GM12878 (cell line): ENCODE measurements at regions of chr5 and their contacts with region 1.

Region 1: DNA sequence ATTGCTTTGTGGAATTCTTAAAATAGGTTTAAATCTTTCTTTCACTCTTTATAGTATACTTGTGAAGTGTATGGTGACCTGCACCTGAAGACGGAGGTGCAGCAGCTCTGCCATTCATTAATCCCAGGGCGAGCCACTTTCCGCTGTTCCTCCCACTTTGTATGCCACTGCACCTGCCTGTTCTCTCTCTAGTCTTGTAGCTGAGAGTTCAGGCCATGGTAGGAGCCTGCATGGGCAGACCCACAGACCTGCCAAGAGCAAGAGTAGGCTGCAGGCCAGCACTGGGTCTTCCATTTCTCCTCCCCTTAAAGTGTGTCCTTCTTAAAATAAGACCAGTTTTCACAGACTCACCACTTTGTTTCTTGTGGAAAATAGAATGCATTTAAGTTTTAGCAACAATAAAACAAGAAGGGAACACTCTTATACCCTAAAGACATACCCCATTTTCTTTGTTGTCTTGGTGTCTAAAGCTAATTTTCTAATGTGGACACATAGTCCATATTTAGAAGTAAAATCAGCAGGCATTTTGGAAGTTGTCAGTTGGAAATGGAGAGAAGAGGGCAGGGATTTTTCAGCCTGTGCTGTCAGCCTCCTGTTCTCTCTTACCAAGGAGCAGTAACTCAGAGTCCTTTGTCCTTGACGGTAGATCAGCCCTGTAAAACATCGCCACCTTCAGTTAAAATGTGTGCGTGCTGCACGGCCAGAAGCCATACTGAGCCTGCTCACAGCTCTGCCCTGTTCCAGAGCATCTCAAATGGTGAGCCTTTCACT is 103.2 kb downstream of the SNCAIP start:
- DNase-seq: no peak
- ATAC-seq: peak; percentile 93
- H3K4me3 ChIP-seq: no peak overlapping the region
- H3K27ac ChIP-seq: no peak overlapping the region
- H3K4me1 ChIP-seq: peaks cover 20% of the 10 kb centered on the region
- H3K27me3 ChIP-seq: no peaks in the 10 kb centered on the region
- CTCF ChIP-seq: peak; percentile 63 to 88 (median 88)
- EP300 ChIP-seq: no peak
- POLR2A ChIP-seq: no peak
- RAD21 ChIP-seq: peak; percentile 93

Region 2: GRCh38 chr5:121968910-121969607 is 446.2 kb before region 1 on chr5:
- CTCF ChIA-PET with region 1: interaction called, 6 read pairs
- POLR2A ChIA-PET with region 1: interaction called, 4 read pairs
- RAD21 ChIA-PET with region 1: no interaction called
- SMC1A ChIA-PET with region 1: no interaction called
- in situ Hi-C with region 1: no loop called
- intact Hi-C with region 1: loop called (anchors 10 kb)
- DNase-seq: no peak
- ATAC-seq: peak; percentile 60
- H3K4me3 ChIP-seq: no peak overlapping the region
- H3K27ac ChIP-seq: no peak overlapping the region
- H3K4me1 ChIP-seq: peaks cover 3% of the 10 kb centered on the region; the same call in 1 of the 2 replicates
- H3K27me3 ChIP-seq: no peaks in the 10 kb centered on the region
- CTCF ChIP-seq: no peak
- EP300 ChIP-seq: no peak
- POLR2A ChIP-seq: no peak
- RAD21 ChIP-seq: no peak

Region 3: GRCh38 chr5:122192497-122193496 is 222.4 kb before region 1 on chr5:
- CTCF ChIA-PET with region 1: interaction called, 65 read pairs
- POLR2A ChIA-PET with region 1: interaction called, 5 read pairs
- RAD21 ChIA-PET with region 1: interaction called, 26 read pairs
- SMC1A ChIA-PET with region 1: interaction called, 41 read pairs
- in situ Hi-C with region 1: loop called (anchors 5 kb)
- intact Hi-C with region 1: loop called (anchors 1 kb)
- DNase-seq: peak; percentile 11
- ATAC-seq: peak; percentile 95
- H3K4me3 ChIP-seq: no peak overlapping the region
- H3K27ac ChIP-seq: no peak overlapping the region
- H3K4me1 ChIP-seq: no peaks in the 10 kb centered on the region
- H3K27me3 ChIP-seq: no peaks in the 10 kb centered on the region; a peak in 2 of 4 replicates
- CTCF ChIP-seq: peak; percentile 56 to 65 (median 58)
- EP300 ChIP-seq: no peak
- POLR2A ChIP-seq: no peak
- RAD21 ChIP-seq: peak; percentile 89

Region 4: GRCh38 chr5:122295138-122295537 is 120.1 kb before region 1 on chr5:
- CTCF ChIA-PET with region 1: interaction called, 47 read pairs
- POLR2A ChIA-PET with region 1: no interaction called
- RAD21 ChIA-PET with region 1: interaction called, 35 read pairs
- SMC1A ChIA-PET with region 1: interaction called, 18 read pairs
- in situ Hi-C with region 1: no loop called
- intact Hi-C with region 1: loop called (anchors 2 kb)
- DNase-seq: no peak
- ATAC-seq: peak; percentile 82
- H3K4me3 ChIP-seq: no peak overlapping the region
- H3K27ac ChIP-seq: no peak overlapping the region
- H3K4me1 ChIP-seq: peaks cover 12% of the 10 kb centered on the region
- H3K27me3 ChIP-seq: no peaks in the 10 kb centered on the region; a peak in 1 of 4 replicates
- CTCF ChIP-seq: peak; percentile 36 to 46 (median 38); a peak in 4 of 6 replicates
- EP300 ChIP-seq: no peak
- POLR2A ChIP-seq: no peak
- RAD21 ChIP-seq: peak; percentile 29; the same call in 1 of the 2 replicates

Region 5: GRCh38 chr5:122300374-122300773 is 114.8 kb before region 1 on chr5:
- CTCF ChIA-PET with region 1: interaction called, 47 read pairs
- POLR2A ChIA-PET with region 1: no interaction called
- RAD21 ChIA-PET with region 1: interaction called, 35 read pairs
- SMC1A ChIA-PET with region 1: interaction called, 18 read pairs
- in situ Hi-C with region 1: no loop called
- intact Hi-C with region 1: loop called (anchors 2 kb)
- DNase-seq: no peak
- ATAC-seq: peak; percentile 63
- H3K4me3 ChIP-seq: no peak overlapping the region
- H3K27ac ChIP-seq: no peak overlapping the region
- H3K4me1 ChIP-seq: peaks cover 12% of the 10 kb centered on the region
- H3K27me3 ChIP-seq: no peaks in the 10 kb centered on the region
- CTCF ChIP-seq: no peak
- EP300 ChIP-seq: no peak
- POLR2A ChIP-seq: no peak
- RAD21 ChIP-seq: no peak

Region 6: DNA sequence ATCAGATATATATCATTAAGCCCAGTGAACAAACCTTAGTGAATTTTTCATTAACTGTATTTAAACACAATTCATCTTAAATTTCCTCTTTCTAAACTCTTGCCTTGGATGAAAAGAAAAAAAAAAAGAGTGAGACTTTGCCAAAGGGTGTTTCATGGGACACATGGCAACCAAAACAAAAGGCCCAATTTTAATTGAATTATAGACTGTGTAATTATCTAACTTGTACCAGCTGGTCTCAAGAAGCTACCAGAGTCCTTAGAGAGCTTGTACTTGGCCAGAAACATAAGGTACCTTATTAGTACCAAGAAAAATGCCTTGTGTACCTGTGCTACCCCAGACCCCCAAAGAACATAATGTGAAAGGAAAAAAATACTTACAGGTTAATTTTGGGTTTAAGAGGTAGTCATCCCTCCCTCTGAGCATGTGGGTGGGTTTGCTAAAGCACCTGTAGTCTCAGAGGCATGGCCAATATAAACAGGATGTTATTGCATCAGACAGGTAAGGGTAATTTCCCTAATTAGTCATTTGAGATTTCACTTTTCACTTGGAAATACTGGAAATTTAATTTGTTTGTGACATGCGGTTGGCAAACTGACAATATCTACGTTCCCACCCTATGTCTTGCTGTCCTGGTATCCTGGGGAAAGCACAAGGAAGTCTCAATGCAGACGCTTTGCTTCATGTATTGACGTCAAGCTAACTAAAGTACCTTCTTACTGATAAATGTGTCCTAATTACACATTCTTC is 13.1 kb before region 1 on chr5:
- CTCF ChIA-PET with region 1: interaction called, 11 read pairs
- POLR2A ChIA-PET with region 1: no interaction called
- RAD21 ChIA-PET with region 1: interaction called, 4 read pairs
- SMC1A ChIA-PET with region 1: interaction called, 9 read pairs
- in situ Hi-C with region 1: no loop called
- intact Hi-C with region 1: no loop called
- DNase-seq: no peak
- ATAC-seq: no peak
- H3K4me3 ChIP-seq: no peak overlapping the region
- H3K27ac ChIP-seq: no peak overlapping the region
- H3K4me1 ChIP-seq: no peaks in the 10 kb centered on the region
- H3K27me3 ChIP-seq: no peaks in the 10 kb centered on the region
- CTCF ChIP-seq: no peak
- EP300 ChIP-seq: no peak
- POLR2A ChIP-seq: no peak
- RAD21 ChIP-seq: no peak

Region 7: GRCh38 chr5:122492664-122493063 is 77.4 kb after region 1 on chr5:
- CTCF ChIA-PET with region 1: no interaction called
- POLR2A ChIA-PET with region 1: no interaction called
- RAD21 ChIA-PET with region 1: no interaction called
- SMC1A ChIA-PET with region 1: no interaction called
- in situ Hi-C with region 1: no loop called
- intact Hi-C with region 1: loop called (anchors 5 kb)
- DNase-seq: no peak
- ATAC-seq: peak; percentile 68
- H3K4me3 ChIP-seq: no peak overlapping the region
- H3K27ac ChIP-seq: no peak overlapping the region
- H3K4me1 ChIP-seq: no peaks in the 10 kb centered on the region
- H3K27me3 ChIP-seq: peaks cover 0 to 3% of the 10 kb centered on the region in 2 experiments; a peak in 1 of 4 replicates
- CTCF ChIP-seq: peak; percentile 23 to 52 (median 36); a peak in 5 of 6 replicates
- EP300 ChIP-seq: no peak
- POLR2A ChIP-seq: no peak
- RAD21 ChIP-seq: peak; percentile 70

Region 8: GRCh38 chr5:122565331-122565730 is 150.1 kb after region 1 on chr5:
- CTCF ChIA-PET with region 1: no interaction called
- POLR2A ChIA-PET with region 1: no interaction called
- RAD21 ChIA-PET with region 1: no interaction called
- SMC1A ChIA-PET with region 1: no interaction called
- in situ Hi-C with region 1: no loop called
- intact Hi-C with region 1: no loop called
- DNase-seq: no peak
- ATAC-seq: no peak
- H3K4me3 ChIP-seq: no peak overlapping the region
- H3K27ac ChIP-seq: no peak overlapping the region
- H3K4me1 ChIP-seq: no peaks in the 10 kb centered on the region
- H3K27me3 ChIP-seq: no peaks in the 10 kb centered on the region
- CTCF ChIP-seq: no peak
- EP300 ChIP-seq: no peak
- POLR2A ChIP-seq: no peak
- RAD21 ChIP-seq: no peak